Activated naive CD4-positive, alpha-beta T cell treated with anti-CD3 and anti-CD28 coated beads, Interleukin-2, amount 10 ng/mL, durations not matched to agents 7 days and 5 days (primary cell): ENCODE measurements at regions of chr17 and their contacts with region 1.

Region 1: GRCh38 chr17:75012346-75013091 is at the start of gene MRPL58:
- DNase-seq: peak; percentile 88
- H3K4me3 Mint-ChIP-seq: peak within 1 kb of the TSS; percentile 95
- H3K27ac Mint-ChIP-seq: peak within 1 kb of the TSS; percentile 92
- H3K4me1 Mint-ChIP-seq: peaks cover 29% of the 10 kb centered on the region
- H3K27me3 Mint-ChIP-seq: peaks cover 18% of the 10 kb centered on the region

Region 2: GRCh38 chr17:75024686-75025397 is 12.3 kb after region 1 on chr17:
- CTCF ChIA-PET with region 1: interaction called, 14 read pairs
- DNase-seq: peak; percentile 62
- H3K4me3 Mint-ChIP-seq: peak overlapping the region; percentile 53
- H3K27ac Mint-ChIP-seq: peak overlapping the region; percentile 84
- H3K4me1 Mint-ChIP-seq: peaks cover 25% of the 10 kb centered on the region
- H3K27me3 Mint-ChIP-seq: peaks cover 10% of the 10 kb centered on the region

Region 3: GRCh38 chr17:75031972-75032900 is 19.7 kb after region 1 on chr17:
- CTCF ChIA-PET with region 1: interaction called, 10 read pairs
- DNase-seq: peak; percentile 64
- H3K4me3 Mint-ChIP-seq: peak overlapping the region; percentile 62
- H3K27ac Mint-ChIP-seq: no peak overlapping the region
- H3K4me1 Mint-ChIP-seq: peaks cover 62% of the 10 kb centered on the region
- H3K27me3 Mint-ChIP-seq: peaks cover 53% of the 10 kb centered on the region

Region 4: DNA sequence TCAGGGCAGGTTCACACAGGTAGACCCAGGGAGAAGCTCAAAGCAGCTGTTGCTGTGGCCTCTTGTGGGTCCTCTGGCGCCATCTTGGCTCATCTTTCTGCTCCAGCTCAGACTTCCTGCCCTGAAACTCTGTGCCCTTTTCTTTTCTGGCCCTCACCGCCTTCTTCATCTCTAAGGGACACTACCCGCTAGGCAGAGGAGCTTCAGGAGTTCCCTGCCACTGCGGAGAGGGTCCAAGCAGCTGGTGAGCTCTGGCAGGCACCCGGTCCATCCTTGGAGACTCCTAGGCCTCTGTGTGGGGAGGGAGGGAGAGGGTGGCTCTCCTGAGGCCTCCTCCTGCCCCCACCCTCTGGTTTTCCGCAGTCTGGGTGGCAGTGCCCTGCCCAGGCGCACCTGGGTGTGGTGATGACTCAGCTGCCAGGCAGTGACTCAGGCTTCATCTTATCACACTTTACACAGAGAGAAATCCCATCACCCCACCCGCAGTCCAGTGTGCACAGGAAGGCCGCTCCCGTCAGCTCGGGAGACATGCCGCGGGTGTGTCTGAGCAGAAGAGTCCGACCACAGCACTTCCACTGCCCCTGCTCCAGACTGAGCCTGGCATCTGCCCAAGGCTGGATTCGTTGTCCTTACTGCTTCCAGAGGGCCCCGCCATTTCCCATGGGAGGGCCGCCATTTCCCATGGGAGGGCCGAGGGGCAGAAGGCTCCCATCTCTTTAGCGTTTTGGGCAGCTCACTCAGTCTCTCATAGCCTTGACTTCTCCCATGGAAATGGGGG is 111.7 kb after region 1 on chr17:
- CTCF ChIA-PET with region 1: no interaction called
- DNase-seq: peak; percentile 64
- H3K4me3 Mint-ChIP-seq: peak overlapping the region; percentile 15
- H3K27ac Mint-ChIP-seq: peak overlapping the region; percentile 76
- H3K4me1 Mint-ChIP-seq: peaks cover 45% of the 10 kb centered on the region
- H3K27me3 Mint-ChIP-seq: no peaks in the 10 kb centered on the region